Prostate gland (tissue), 2 donors: ENCODE measurements at regions of chr20 and their contacts with region 1.

Region 1: DNA sequence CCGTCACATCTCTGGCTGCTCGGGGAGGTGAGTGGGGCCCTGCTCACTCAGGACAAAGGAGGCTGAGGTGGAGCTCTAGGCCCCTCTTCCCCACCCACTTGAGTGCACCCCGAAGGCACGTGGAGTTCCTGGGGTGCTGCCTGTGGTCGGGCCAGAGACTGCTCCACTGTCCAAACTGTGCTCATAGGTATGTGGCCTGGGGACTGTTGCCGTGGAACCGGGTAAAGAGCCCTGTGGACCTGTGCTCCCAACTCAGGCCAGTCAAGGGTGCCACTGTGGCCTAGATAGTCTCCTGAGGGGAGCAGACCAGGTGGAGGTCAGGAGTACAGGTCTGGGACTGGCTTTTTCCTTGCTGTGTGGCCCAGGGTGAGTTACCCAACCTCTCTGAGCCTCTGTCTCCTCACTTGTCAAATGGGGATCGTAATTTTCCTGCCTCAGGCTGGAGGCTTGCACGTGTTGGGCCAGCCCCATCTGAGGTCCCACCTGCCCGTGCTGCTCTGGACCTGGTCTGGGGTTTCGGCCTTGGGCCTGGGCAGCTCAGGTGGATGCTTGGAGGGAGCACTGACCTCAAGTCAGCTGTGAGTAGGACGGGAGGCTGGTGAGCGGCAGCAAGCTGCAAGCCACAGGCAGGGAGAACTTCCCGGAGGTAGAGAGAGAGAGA is 12.4 kb upstream of the NPBWR2 start:
- DNase-seq: no peak
- H3K4me3 ChIP-seq: no peak overlapping the region
- H3K27ac ChIP-seq: no peak overlapping the region
- H3K4me1 ChIP-seq: no peaks in the 10 kb centered on the region
- H3K27me3 ChIP-seq: no peaks in the 10 kb centered on the region
- CTCF ChIP-seq: no peak
- POLR2A ChIP-seq: no peak

Region 2: GRCh38 chr20:64038565-64039292 is 81.1 kb before region 1 on chr20:
- intact Hi-C with region 1: loop called (anchors 2 kb)
- DNase-seq: peak; percentile 54
- H3K4me3 ChIP-seq: peak overlapping the region; percentile 28 to 35
- H3K27ac ChIP-seq: peak overlapping the region; percentile 38 to 51
- H3K4me1 ChIP-seq: peaks cover 3% of the 10 kb centered on the region
- H3K27me3 ChIP-seq: no peaks in the 10 kb centered on the region
- CTCF ChIP-seq: peak in 3 of 4 experiments; percentile 30 to 62 (median 51)
- POLR2A ChIP-seq: no peak